IMR-90 (cell line): ENCODE measurements at regions of chr7 and their contacts with region 1.

Region 1: DNA sequence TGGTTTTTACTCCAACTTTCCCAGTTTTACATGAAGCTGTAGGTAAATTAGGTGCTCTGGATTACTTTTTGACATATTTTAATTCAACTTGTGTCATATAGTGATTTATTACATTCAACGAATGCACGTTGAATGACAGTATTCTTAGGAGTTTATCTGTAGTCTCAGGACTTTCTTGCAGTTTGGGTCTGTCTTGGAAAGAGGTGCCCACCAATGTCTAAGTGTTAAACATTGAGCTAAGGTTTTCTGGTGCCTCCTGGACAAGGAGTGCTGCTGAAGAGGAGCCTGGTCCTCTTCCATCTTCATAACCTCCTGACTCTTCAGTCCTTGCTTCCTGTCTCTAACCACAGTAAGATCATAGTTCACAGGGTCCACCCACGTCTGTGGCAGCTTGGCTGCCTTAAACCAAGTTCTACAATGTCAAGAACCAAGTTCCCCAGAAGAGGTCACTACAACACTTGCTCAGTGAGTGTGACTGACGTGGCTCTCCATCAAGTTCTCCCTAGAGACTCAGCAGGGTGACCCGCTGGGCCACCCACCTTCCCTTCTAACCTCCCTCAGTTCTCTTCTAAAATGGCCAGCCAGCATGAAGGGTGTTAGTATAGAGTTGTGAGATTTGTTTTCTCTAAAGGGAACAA is 6.1 kb downstream of the NPY start:
- DNase-seq: peak; percentile 18
- ATAC-seq: peak; percentile 69
- H3K4me3 ChIP-seq: no peak overlapping the region
- H3K27ac ChIP-seq: no peak overlapping the region
- H3K4me1 ChIP-seq: no peaks in the 10 kb centered on the region
- H3K27me3 ChIP-seq: peaks cover 6% of the 10 kb centered on the region
- CTCF ChIP-seq: 0 out of 2 replicates have a peak, but pooled peaks have one; percentile 23
- POLR2A ChIP-seq: no peak
- RAD21 ChIP-seq: peak; percentile 38

Region 2: GRCh38 chr7:23055582-23056178 is 1234.4 kb before region 1 on chr7:
- CTCF ChIA-PET with region 1: no interaction called
- POLR2A ChIA-PET with region 1: no interaction called
- dilution Hi-C with region 1: no loop called
- in situ Hi-C with region 1: no loop called
- intact Hi-C with region 1: no loop called
- DNase-seq: peak; percentile 77
- ATAC-seq: peak; percentile 94
- H3K4me3 ChIP-seq: no peak overlapping the region
- H3K27ac ChIP-seq: no peak overlapping the region
- H3K4me1 ChIP-seq: no peaks in the 10 kb centered on the region
- H3K27me3 ChIP-seq: no peaks in the 10 kb centered on the region
- CTCF ChIP-seq: peak; percentile 94
- POLR2A ChIP-seq: peak; percentile 45; the same call in 1 of the 2 replicates
- RAD21 ChIP-seq: peak; percentile 98

Region 3: GRCh38 chr7:23247603-23248335 is 1042.4 kb before region 1 on chr7:
- CTCF ChIA-PET with region 1: no interaction called
- POLR2A ChIA-PET with region 1: no interaction called
- dilution Hi-C with region 1: no loop called
- in situ Hi-C with region 1: no loop called
- intact Hi-C with region 1: no loop called
- DNase-seq: no peak
- ATAC-seq: peak; percentile 27; the same call in 1 of the 2 replicates
- H3K4me3 ChIP-seq: no peak overlapping the region
- H3K27ac ChIP-seq: no peak overlapping the region
- H3K4me1 ChIP-seq: no peaks in the 10 kb centered on the region; the same call in 1 of the 2 replicates
- H3K27me3 ChIP-seq: peaks cover 43% of the 10 kb centered on the region
- CTCF ChIP-seq: no peak
- POLR2A ChIP-seq: no peak
- RAD21 ChIP-seq: no peak

Region 4: GRCh38 chr7:24660546-24660945 is 370.4 kb after region 1 on chr7:
- CTCF ChIA-PET with region 1: no interaction called
- POLR2A ChIA-PET with region 1: no interaction called
- dilution Hi-C with region 1: no loop called
- in situ Hi-C with region 1: no loop called
- intact Hi-C with region 1: loop called (anchors 5 kb)
- DNase-seq: peak; percentile 64
- ATAC-seq: peak; percentile 44
- H3K4me3 ChIP-seq: no peak overlapping the region
- H3K27ac ChIP-seq: no peak overlapping the region
- H3K4me1 ChIP-seq: peaks cover 1% of the 10 kb centered on the region; the same call in 1 of the 2 replicates
- H3K27me3 ChIP-seq: no peaks in the 10 kb centered on the region
- CTCF ChIP-seq: no peak
- POLR2A ChIP-seq: no peak
- RAD21 ChIP-seq: no peak

Region 5: GRCh38 chr7:25167262-25167843 is 877.2 kb after region 1 on chr7:
- CTCF ChIA-PET with region 1: no interaction called
- POLR2A ChIA-PET with region 1: no interaction called
- dilution Hi-C with region 1: no loop called
- in situ Hi-C with region 1: loop called (anchors 25 kb)
- intact Hi-C with region 1: no loop called
- DNase-seq: no peak
- ATAC-seq: no peak
- H3K4me3 ChIP-seq: no peak overlapping the region
- H3K27ac ChIP-seq: no peak overlapping the region
- H3K4me1 ChIP-seq: no peaks in the 10 kb centered on the region
- H3K27me3 ChIP-seq: no peaks in the 10 kb centered on the region
- CTCF ChIP-seq: no peak
- POLR2A ChIP-seq: no peak
- RAD21 ChIP-seq: no peak